Heart right ventricle (tissue), 16 donors: ENCODE measurements at regions of chr5 and their contacts with region 1.

Region 1: GRCh38 chr5:149724130-149724840 is 5.8 kb upstream of the PPARGC1B start:
- DNase-seq: no peak
- ATAC-seq: no peak
- H3K4me3 ChIP-seq: no peak overlapping the region
- H3K27ac ChIP-seq: no peak overlapping the region
- H3K4me1 ChIP-seq: peaks cover 0 to 22% (median 6%) of the 10 kb centered on the region in 9 donors
- H3K27me3 ChIP-seq: no peaks in the 10 kb centered on the region
- CTCF ChIP-seq: no peak

Region 2: GRCh38 chr5:149687486-149688168 is 36.7 kb before region 1 on chr5:
- intact Hi-C with region 1: loop called in 2 of 10 experiments (anchors 5 kb)
- DNase-seq: no peak
- ATAC-seq: peak in 1 of 8 donors; percentile 9
- H3K4me3 ChIP-seq: no peak overlapping the region
- H3K27ac ChIP-seq: peak overlapping the region in 7 of 10 donors; percentile 8 to 65 (median 28)
- H3K4me1 ChIP-seq: peaks cover 0 to 43% (median 13%) of the 10 kb centered on the region in 9 donors
- H3K27me3 ChIP-seq: no peaks in the 10 kb centered on the region
- CTCF ChIP-seq: no peak

Region 3: GRCh38 chr5:150234576-150235499 is 510.6 kb after region 1 on chr5:
- intact Hi-C with region 1: no loop called
- DNase-seq: no peak
- ATAC-seq: peak in 2 of 8 donors; percentile 35 to 39
- H3K4me3 ChIP-seq: no peak overlapping the region
- H3K27ac ChIP-seq: no peak overlapping the region
- H3K4me1 ChIP-seq: peaks cover 0 to 14% (median 0%) of the 10 kb centered on the region in 9 donors
- H3K27me3 ChIP-seq: no peaks in the 10 kb centered on the region
- CTCF ChIP-seq: no peak